Esophagus muscularis mucosa (tissue), 4 donors: ENCODE measurements at regions of chr6 and their contacts with region 1.

Region 1: DNA sequence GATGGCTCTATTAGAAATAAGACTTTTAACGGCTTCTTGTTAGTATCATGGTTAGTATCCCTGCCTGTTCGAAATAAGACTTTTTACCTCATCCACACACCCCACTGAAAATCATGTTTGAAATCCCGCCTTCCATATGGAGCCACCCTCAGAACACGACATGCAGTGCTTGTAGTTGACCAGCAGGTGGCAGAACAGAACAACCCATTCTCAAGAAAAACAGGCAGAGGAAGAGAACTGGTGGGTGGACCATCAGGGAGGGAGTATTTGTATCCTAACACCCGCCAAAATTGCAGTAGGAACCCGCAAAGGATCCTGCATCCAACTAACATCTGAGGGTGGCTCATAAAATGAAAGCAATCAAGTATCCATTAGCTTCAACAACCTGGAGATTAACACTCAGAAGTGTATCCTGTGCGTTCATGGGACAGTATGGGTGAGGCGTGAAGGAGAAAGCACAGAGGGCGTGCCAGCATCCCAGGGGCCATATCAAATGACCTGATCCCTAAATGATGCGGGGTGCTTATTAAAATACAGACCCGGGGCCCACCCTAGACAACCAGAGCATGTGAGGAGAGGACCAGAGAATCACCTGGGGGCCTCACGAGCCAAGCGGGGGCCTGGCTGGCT is 89.6 kb upstream of the NHSL1 start:
- DNase-seq: no peak
- H3K4me3 ChIP-seq: no peak overlapping the region
- H3K27ac ChIP-seq: no peak overlapping the region
- H3K4me1 ChIP-seq: peaks cover 4 to 21% (median 19%) of the 10 kb centered on the region in 4 donors
- H3K27me3 ChIP-seq: no peaks in the 10 kb centered on the region
- CTCF ChIP-seq: peak; percentile 93 to 96 (median 93)
- EP300 ChIP-seq: no peak
- POLR2A ChIP-seq: no peak

Region 2: GRCh38 chr6:138115877-138116660 is 472.9 kb before region 1 on chr6:
- intact Hi-C with region 1: loop called (anchors 5 kb)
- DNase-seq: no peak
- H3K4me3 ChIP-seq: no peak overlapping the region
- H3K27ac ChIP-seq: no peak overlapping the region
- H3K4me1 ChIP-seq: peaks cover 0 to 4% (median 0%) of the 10 kb centered on the region in 4 donors
- H3K27me3 ChIP-seq: peaks cover 0 to 10% (median 0%) of the 10 kb centered on the region in 4 donors
- CTCF ChIP-seq: peak; percentile 63 to 79 (median 70)
- EP300 ChIP-seq: no peak
- POLR2A ChIP-seq: no peak

Region 3: DNA sequence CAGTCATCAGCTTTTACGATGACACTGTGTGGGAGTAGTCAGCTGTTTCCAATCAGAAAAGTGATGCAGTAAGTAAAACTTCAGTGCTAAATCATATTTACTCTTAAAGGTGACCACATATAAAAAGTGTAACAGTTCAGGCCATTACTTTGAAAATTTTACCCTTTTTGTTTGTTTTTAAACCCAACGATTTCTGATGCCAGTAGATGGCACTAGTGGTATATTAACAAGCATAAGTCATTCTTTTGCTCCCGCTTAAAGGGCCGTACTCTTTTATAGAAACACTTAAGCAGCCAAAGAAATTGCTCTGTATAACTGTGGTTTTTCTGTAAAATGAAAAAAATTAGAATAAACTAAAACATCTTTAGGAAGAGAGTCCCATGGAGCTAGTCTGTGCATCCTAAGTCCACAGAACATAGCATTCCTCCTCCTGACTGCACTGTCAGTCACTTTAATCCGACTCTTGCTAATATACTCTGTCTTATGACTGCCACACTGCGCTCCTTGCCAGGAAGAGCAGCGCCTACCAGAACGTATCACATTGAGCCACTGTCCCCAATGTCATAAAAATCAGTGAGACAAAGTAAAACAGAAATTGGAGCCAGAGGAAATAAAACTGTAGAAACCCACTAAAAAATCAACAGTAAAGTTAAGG is 159.8 kb before region 1 on chr6:
- intact Hi-C with region 1: loop called (anchors 2 kb)
- DNase-seq: no peak
- H3K4me3 ChIP-seq: peak overlapping the region; percentile 8 to 40 (median 32)
- H3K27ac ChIP-seq: peak overlapping the region; percentile 41 to 50 (median 44)
- H3K4me1 ChIP-seq: peaks cover 14 to 27% (median 22%) of the 10 kb centered on the region in 4 donors
- H3K27me3 ChIP-seq: no peaks in the 10 kb centered on the region
- CTCF ChIP-seq: peak; percentile 60 to 77 (median 63)
- EP300 ChIP-seq: no peak
- POLR2A ChIP-seq: no peak

Region 4: DNA sequence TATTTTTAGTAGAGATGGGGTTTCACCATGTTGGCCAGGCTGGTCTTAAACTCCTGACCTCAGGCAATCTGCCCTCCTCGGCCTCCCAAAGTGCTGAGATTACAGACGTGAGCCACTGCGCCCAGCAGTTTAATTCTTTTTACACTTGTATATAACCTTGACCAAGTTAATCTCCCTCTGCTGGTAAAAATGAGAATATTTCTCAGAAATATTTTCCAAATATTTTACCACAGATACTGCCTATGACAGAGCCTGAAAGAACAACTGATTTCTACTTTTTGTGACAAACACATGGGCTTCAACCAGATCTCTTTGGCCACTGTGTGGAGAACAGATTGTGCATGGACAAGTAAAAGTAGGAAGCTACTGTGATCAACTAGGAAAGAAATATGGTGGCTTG is 68.5 kb before region 1 on chr6:
- intact Hi-C with region 1: loop called (anchors 5 kb)
- DNase-seq: no peak
- H3K4me3 ChIP-seq: no peak overlapping the region
- H3K27ac ChIP-seq: no peak overlapping the region
- H3K4me1 ChIP-seq: peaks cover 0 to 10% (median 5%) of the 10 kb centered on the region in 4 donors
- H3K27me3 ChIP-seq: no peaks in the 10 kb centered on the region
- CTCF ChIP-seq: peak; percentile 45 to 57 (median 48)
- EP300 ChIP-seq: no peak
- POLR2A ChIP-seq: no peak

Region 5: GRCh38 chr6:138692058-138692977 is 103.4 kb after region 1 on chr6:
- intact Hi-C with region 1: loop called (anchors 5 kb)
- DNase-seq: peak; percentile 93
- H3K4me3 ChIP-seq: peak overlapping the region; percentile 82 to 92 (median 88)
- H3K27ac ChIP-seq: peak overlapping the region; percentile 74 to 84 (median 76)
- H3K4me1 ChIP-seq: peaks cover 0 to 17% (median 14%) of the 10 kb centered on the region in 4 donors
- H3K27me3 ChIP-seq: no peaks in the 10 kb centered on the region
- CTCF ChIP-seq: peak; percentile 78 to 92 (median 87)
- EP300 ChIP-seq: no peak
- POLR2A ChIP-seq: no peak

Region 6: GRCh38 chr6:138765896-138766655 is 177.2 kb after region 1 on chr6:
- intact Hi-C with region 1: loop called (anchors 2 kb)
- DNase-seq: no peak
- H3K4me3 ChIP-seq: no peak overlapping the region
- H3K27ac ChIP-seq: no peak overlapping the region
- H3K4me1 ChIP-seq: no peaks in the 10 kb centered on the region
- H3K27me3 ChIP-seq: no peaks in the 10 kb centered on the region
- CTCF ChIP-seq: peak; percentile 74 to 76 (median 74)
- EP300 ChIP-seq: no peak
- POLR2A ChIP-seq: no peak